B cell (primary cell): ENCODE measurements at regions of chr19 and their contacts with region 1.

Region 1: DNA sequence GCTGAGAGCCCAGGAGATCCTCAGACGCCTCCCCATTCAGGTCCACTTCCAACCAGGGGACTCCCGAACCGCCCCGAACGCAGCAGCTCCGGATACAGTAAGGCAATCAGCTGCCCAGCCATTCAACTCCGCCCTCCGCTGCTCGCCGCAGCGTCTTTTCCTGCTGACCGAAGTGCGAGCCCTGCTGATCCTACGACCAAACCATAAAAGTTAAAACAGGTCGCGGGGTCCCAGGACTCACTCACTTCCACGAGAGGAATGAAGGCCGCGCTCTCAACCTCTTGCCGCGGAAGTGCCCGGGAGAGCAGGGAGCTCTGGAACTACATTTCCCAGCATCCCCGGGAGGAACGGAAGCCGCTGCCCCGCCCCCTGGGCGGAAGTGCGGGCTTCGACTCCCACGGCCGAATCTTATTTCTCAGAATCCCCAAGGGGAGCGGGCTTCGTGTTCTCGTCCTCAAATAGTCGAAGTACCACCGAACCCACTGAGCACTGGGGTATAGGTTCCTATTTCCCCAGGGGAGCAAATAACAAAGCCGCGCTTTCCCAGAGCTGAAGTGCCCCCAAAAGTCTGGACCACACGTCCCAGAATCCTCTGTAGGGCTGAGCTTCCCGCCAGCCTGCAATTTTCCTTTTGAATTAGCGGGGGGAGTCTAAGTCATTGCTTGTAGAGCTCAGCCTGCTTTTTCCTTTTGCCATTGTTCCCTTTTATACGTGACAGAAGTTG is at the start of gene ZNF45:
- DNase-seq: peak; percentile 91
- ATAC-seq: peak; percentile 96
- H3K4me3 ChIP-seq: peak within 1 kb of the TSS; percentile 61 to 93 (median 81)
- H3K4me3 Mint-ChIP-seq: peak within 1 kb of the TSS; percentile 97
- H3K27ac ChIP-seq: peak within 1 kb of the TSS; percentile 55 to 72
- H3K27ac Mint-ChIP-seq: peak within 1 kb of the TSS; percentile 88
- H3K4me1 ChIP-seq: peaks cover 11 to 12% of the 10 kb centered on the region in 2 donors
- H3K4me1 Mint-ChIP-seq: peaks cover 26% of the 10 kb centered on the region
- H3K27me3 ChIP-seq: no peaks in the 10 kb centered on the region
- H3K27me3 Mint-ChIP-seq: no peaks in the 10 kb centered on the region
- CTCF ChIP-seq: no peak
- total RNA-seq, gene ZNF45: 30.1 and 31.7 TPM in 2 replicates

Region 2: DNA sequence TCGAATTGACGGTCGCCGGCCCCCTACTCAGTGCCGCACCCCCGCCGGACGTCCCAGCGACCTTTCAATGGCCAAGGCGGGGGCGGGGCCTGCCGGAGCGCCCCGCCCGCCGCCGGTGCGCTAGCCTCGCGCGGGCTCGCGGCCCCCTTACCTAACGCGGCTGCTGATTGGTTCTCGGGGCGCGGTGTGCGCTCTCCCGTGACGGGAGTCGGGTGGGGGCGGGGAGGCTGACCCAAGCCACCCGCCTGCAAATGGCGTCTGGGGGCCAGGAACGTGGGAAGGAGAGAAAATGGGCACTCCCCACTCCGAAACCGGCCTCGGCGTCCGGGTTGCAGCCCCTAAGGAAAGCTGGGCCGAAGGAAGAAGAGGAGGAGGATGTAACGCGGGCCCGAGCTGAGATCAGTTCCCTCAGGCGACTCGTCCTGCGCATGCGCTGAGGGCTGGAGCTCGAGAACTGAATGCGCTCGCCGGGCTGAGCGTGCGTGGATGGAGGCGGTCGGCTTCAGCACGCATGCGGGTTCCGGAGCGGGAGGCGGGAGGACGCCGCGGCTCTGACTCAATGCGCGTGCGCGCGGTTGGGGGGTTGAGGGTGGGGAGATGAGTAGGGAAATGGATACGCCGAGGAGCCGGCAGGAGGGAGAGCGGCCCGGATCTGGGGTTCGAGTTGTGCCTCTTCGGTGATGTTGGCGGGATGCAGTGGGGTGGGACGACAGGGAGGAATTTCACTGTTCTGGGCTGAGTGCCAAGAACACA is 180.5 kb before region 1 on chr19 and contains the start of gene SMG9:
- CTCF ChIA-PET with region 1: no interaction called
- POLR2A ChIA-PET with region 1: no interaction called
- intact Hi-C with region 1: loop called (anchors 10 kb)
- DNase-seq: peak; percentile 99
- ATAC-seq: peak; percentile 81
- H3K4me3 ChIP-seq: peak within 1 kb of the TSS; percentile 63 to 88 (median 84)
- H3K4me3 Mint-ChIP-seq: peak within 1 kb of the TSS; percentile 99
- H3K27ac ChIP-seq: peak within 1 kb of the TSS; percentile 93 to 98
- H3K27ac Mint-ChIP-seq: peak within 1 kb of the TSS; percentile 100
- H3K4me1 ChIP-seq: peaks cover 27 to 58% of the 10 kb centered on the region in 2 donors
- H3K4me1 Mint-ChIP-seq: peaks cover 71% of the 10 kb centered on the region
- H3K27me3 ChIP-seq: no peaks in the 10 kb centered on the region
- H3K27me3 Mint-ChIP-seq: no peaks in the 10 kb centered on the region
- CTCF ChIP-seq: no peak
- total RNA-seq, gene SMG9: 87.5 and 89.9 TPM in 2 replicates

Region 3: GRCh38 chr19:43901395-43902390 is 33.5 kb before region 1 on chr19:
- CTCF ChIA-PET with region 1: no interaction called
- POLR2A ChIA-PET with region 1: no interaction called
- intact Hi-C with region 1: loop called (anchors 1 kb)
- DNase-seq: peak; percentile 79
- ATAC-seq: peak; percentile 95
- H3K4me3 ChIP-seq: peak overlapping the region; percentile 50 to 74 (median 66)
- H3K4me3 Mint-ChIP-seq: peak overlapping the region; percentile 97
- H3K27ac ChIP-seq: peak overlapping the region; percentile 35 to 39
- H3K27ac Mint-ChIP-seq: peak overlapping the region; percentile 80
- H3K4me1 ChIP-seq: peaks cover 13 to 16% of the 10 kb centered on the region in 2 donors
- H3K4me1 Mint-ChIP-seq: peaks cover 19% of the 10 kb centered on the region
- H3K27me3 ChIP-seq: no peaks in the 10 kb centered on the region
- H3K27me3 Mint-ChIP-seq: no peaks in the 10 kb centered on the region
- CTCF ChIP-seq: no peak

Region 4: GRCh38 chr19:43983912-43984686 is 49.0 kb after region 1 on chr19 and contains the start of gene ZNF155:
- CTCF ChIA-PET with region 1: no interaction called
- POLR2A ChIA-PET with region 1: interaction called, 5 read pairs
- intact Hi-C with region 1: loop called (anchors 1 kb)
- DNase-seq: peak; percentile 84
- ATAC-seq: peak; percentile 92
- H3K4me3 ChIP-seq: peak within 1 kb of the TSS; percentile 79 to 93 (median 85)
- H3K4me3 Mint-ChIP-seq: peak within 1 kb of the TSS; percentile 95
- H3K27ac ChIP-seq: peak within 1 kb of the TSS; percentile 61 to 79
- H3K27ac Mint-ChIP-seq: peak within 1 kb of the TSS; percentile 80
- H3K4me1 ChIP-seq: peaks cover 3 to 14% of the 10 kb centered on the region in 2 donors
- H3K4me1 Mint-ChIP-seq: peaks cover 12% of the 10 kb centered on the region
- H3K27me3 ChIP-seq: no peaks in the 10 kb centered on the region
- H3K27me3 Mint-ChIP-seq: no peaks in the 10 kb centered on the region
- CTCF ChIP-seq: no peak
- total RNA-seq, gene ZNF155: 8.4 and 8.9 TPM in 2 replicates

Region 5: DNA sequence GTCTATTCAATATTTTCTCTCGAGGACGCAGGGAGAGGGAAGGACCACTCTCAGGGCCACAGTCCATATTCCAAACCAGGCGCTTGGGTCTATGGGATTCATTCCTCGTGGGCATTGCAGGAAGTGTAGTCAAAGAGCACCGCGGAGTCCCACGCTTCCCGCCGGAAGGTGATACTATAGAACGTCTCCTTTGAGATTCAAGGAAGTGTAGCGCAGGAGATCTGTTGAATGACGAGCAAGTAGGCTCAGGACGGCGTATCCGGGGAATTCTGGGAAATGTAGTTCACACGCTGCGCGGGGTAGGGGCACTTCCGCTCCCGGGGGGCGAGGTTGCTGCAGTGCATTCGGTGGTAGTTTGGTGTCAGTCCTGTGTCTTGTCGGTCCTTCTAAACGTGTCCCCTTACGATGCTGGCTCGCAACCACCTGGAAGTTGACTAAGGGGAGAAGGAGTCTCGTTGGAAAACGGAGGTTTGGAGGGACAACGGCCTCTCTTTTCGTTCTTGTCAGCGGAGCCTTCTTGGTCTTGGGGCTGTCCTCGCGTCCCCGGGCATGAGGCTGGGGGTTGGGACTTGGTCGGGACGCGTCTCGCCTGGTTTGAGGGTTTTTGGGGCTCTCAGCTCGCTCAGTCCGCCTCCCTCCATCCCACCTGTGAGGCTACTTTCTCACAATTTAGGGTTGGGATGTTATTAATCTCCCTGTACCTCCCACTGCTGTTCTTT is 136.8 kb after region 1 on chr19 and contains the start of gene ZNF284:
- CTCF ChIA-PET with region 1: no interaction called
- POLR2A ChIA-PET with region 1: no interaction called
- intact Hi-C with region 1: loop called (anchors 1 kb)
- DNase-seq: peak; percentile 89
- ATAC-seq: peak; percentile 100
- H3K4me3 ChIP-seq: peak within 1 kb of the TSS; percentile 68 to 89 (median 76)
- H3K4me3 Mint-ChIP-seq: peak within 1 kb of the TSS; percentile 89
- H3K27ac ChIP-seq: peak within 1 kb of the TSS; percentile 32 to 47
- H3K27ac Mint-ChIP-seq: peak within 1 kb of the TSS; percentile 76
- H3K4me1 ChIP-seq: peaks cover 13 to 16% of the 10 kb centered on the region in 2 donors
- H3K4me1 Mint-ChIP-seq: peaks cover 25% of the 10 kb centered on the region
- H3K27me3 ChIP-seq: no peaks in the 10 kb centered on the region
- H3K27me3 Mint-ChIP-seq: no peaks in the 10 kb centered on the region
- CTCF ChIP-seq: no peak
- total RNA-seq, gene ZNF284: 3.3 and 4.9 TPM in 2 replicates

Region 6: GRCh38 chr19:44113138-44113783 is 178.1 kb after region 1 on chr19 and contains the start of gene ZNF225:
- CTCF ChIA-PET with region 1: no interaction called
- POLR2A ChIA-PET with region 1: no interaction called
- intact Hi-C with region 1: loop called (anchors 1 kb)
- DNase-seq: peak; percentile 91
- ATAC-seq: peak; percentile 95
- H3K4me3 ChIP-seq: peak within 1 kb of the TSS; percentile 71 to 98 (median 86)
- H3K4me3 Mint-ChIP-seq: peak within 1 kb of the TSS; percentile 99
- H3K27ac ChIP-seq: peak within 1 kb of the TSS; percentile 45 to 65
- H3K27ac Mint-ChIP-seq: peak within 1 kb of the TSS; percentile 90
- H3K4me1 ChIP-seq: peaks cover 9 to 19% of the 10 kb centered on the region in 2 donors
- H3K4me1 Mint-ChIP-seq: peaks cover 28% of the 10 kb centered on the region
- H3K27me3 ChIP-seq: no peaks in the 10 kb centered on the region
- H3K27me3 Mint-ChIP-seq: no peaks in the 10 kb centered on the region
- CTCF ChIP-seq: no peak
- total RNA-seq, gene ZNF225: 12.1 and 13.1 TPM in 2 replicates

Region 7: DNA sequence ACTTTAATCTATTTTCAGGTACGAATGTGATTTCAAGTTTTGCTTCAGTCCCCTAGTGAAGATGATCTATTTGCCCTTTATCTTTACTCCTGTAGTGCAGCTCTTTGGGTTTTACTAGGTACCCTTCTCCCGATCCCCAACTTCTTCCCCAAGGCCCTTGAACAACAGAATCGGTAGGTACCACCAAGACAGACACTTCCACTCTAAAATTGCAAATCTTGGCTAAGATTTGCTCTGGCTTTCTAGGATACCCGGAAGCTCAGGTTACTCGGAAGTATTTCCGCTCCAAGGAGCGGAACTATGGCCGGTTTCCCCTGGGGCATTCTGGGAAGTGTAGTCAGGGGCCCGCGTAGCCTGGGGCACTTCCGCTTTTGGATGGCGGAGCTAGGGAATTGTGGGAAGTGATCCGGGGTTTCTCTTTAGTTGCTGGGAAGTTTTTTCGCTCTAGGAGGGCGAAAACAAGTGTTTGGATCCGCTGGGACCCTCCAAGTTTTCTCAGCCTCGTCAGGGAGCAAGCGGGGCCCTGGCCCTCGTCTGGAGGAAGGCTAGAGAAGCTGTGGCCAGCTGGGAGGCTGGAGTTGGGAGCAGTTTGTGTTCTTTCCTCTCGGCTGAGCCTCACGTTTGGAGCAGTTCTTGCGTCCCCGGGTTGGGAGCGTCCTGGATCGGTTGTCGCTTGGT is 272.1 kb after region 1 on chr19:
- CTCF ChIA-PET with region 1: no interaction called
- POLR2A ChIA-PET with region 1: no interaction called
- intact Hi-C with region 1: loop called (anchors 1 kb)
- DNase-seq: peak; percentile 91
- ATAC-seq: peak; percentile 91
- H3K4me3 ChIP-seq: peak overlapping the region; percentile 70 to 93 (median 88)
- H3K4me3 Mint-ChIP-seq: peak overlapping the region; percentile 88
- H3K27ac ChIP-seq: peak overlapping the region; percentile 71 to 86
- H3K27ac Mint-ChIP-seq: peak overlapping the region; percentile 92
- H3K4me1 ChIP-seq: peaks cover 4 to 7% of the 10 kb centered on the region in 2 donors
- H3K4me1 Mint-ChIP-seq: peaks cover 11% of the 10 kb centered on the region
- H3K27me3 ChIP-seq: no peaks in the 10 kb centered on the region
- H3K27me3 Mint-ChIP-seq: peaks cover 13% of the 10 kb centered on the region
- CTCF ChIP-seq: no peak